Activated CD4-positive, alpha-beta T cell treated with anti-CD3 and anti-CD28 coated beads for 36 hours (primary cell): ENCODE measurements at regions of chr11 and their contacts with region 1.

Region 1: GRCh38 chr11:18775492-18776292 is 15.9 kb downstream of the PTPN5 start:
- DNase-seq: peak; percentile 88
- ATAC-seq: peak; percentile 74
- H3K4me3 Mint-ChIP-seq: no peak overlapping the region
- H3K27ac Mint-ChIP-seq: no peak overlapping the region
- H3K4me1 Mint-ChIP-seq: peaks cover 7% of the 10 kb centered on the region
- H3K27me3 Mint-ChIP-seq: peaks cover 10% of the 10 kb centered on the region

Region 2: GRCh38 chr11:18650859-18651557 is 124.7 kb before region 1 on chr11:
- CTCF ChIA-PET with region 1: no interaction called
- POLR2A ChIA-PET with region 1: no interaction called
- intact Hi-C with region 1: no loop called
- DNase-seq: peak; percentile 66
- ATAC-seq: peak; percentile 74
- H3K4me3 Mint-ChIP-seq: no peak overlapping the region
- H3K27ac Mint-ChIP-seq: no peak overlapping the region
- H3K4me1 Mint-ChIP-seq: no peaks in the 10 kb centered on the region
- H3K27me3 Mint-ChIP-seq: no peaks in the 10 kb centered on the region

Region 3: GRCh38 chr11:18802381-18803257 is 26.9 kb after region 1 on chr11:
- CTCF ChIA-PET with region 1: interaction called, 4 read pairs
- POLR2A ChIA-PET with region 1: no interaction called
- intact Hi-C with region 1: loop called (anchors 1 kb)
- DNase-seq: peak; percentile 60
- ATAC-seq: no peak
- H3K4me3 Mint-ChIP-seq: no peak overlapping the region
- H3K27ac Mint-ChIP-seq: no peak overlapping the region
- H3K4me1 Mint-ChIP-seq: peaks cover 1% of the 10 kb centered on the region
- H3K27me3 Mint-ChIP-seq: peaks cover 9% of the 10 kb centered on the region

Region 4: DNA sequence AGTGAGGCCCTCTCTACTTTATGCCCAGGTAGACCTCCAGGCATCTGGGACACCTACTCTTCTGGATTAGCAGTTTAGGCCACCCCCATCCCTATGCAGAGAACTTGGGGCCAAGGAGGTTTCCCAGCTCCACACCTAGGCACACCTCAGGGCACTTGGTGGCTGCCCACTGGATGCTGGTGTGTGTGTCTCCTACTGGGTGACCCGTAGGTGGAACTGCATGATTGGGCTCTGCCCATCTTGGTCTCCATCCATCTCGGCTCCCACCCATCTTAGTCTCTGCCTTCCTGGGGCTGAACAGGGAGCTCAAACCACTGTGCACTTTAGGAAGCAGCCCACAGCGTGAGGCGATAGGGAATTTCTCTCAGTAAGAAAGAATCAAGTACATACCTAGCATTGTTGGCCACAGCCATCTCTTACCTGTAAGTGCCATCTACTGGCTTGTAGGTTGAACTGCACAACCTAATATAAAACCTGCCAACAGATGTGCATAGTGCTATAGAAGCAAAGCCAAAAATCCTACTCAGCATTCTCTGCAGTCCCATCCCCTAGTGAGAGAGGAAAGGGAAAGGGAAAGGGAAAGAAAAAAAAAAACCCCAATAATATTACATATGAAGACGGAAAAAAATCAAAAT is 77.5 kb after region 1 on chr11:
- CTCF ChIA-PET with region 1: no interaction called
- POLR2A ChIA-PET with region 1: no interaction called
- intact Hi-C with region 1: loop called in 1 of 2 experiments (anchors 1 kb)
- DNase-seq: no peak
- ATAC-seq: no peak
- H3K4me3 Mint-ChIP-seq: no peak overlapping the region
- H3K27ac Mint-ChIP-seq: no peak overlapping the region
- H3K4me1 Mint-ChIP-seq: no peaks in the 10 kb centered on the region
- H3K27me3 Mint-ChIP-seq: peaks cover 22% of the 10 kb centered on the region

Region 5: GRCh38 chr11:18934195-18934814 is 158.6 kb after region 1 on chr11:
- CTCF ChIA-PET with region 1: no interaction called
- POLR2A ChIA-PET with region 1: no interaction called
- intact Hi-C with region 1: no loop called
- DNase-seq: no peak
- ATAC-seq: no peak
- H3K4me3 Mint-ChIP-seq: no peak overlapping the region
- H3K27ac Mint-ChIP-seq: no peak overlapping the region
- H3K4me1 Mint-ChIP-seq: no peaks in the 10 kb centered on the region
- H3K27me3 Mint-ChIP-seq: peaks cover 17% of the 10 kb centered on the region